H1 (cell line): ENCODE measurements at regions of chr13 and their contacts with region 1.

Region 1: DNA sequence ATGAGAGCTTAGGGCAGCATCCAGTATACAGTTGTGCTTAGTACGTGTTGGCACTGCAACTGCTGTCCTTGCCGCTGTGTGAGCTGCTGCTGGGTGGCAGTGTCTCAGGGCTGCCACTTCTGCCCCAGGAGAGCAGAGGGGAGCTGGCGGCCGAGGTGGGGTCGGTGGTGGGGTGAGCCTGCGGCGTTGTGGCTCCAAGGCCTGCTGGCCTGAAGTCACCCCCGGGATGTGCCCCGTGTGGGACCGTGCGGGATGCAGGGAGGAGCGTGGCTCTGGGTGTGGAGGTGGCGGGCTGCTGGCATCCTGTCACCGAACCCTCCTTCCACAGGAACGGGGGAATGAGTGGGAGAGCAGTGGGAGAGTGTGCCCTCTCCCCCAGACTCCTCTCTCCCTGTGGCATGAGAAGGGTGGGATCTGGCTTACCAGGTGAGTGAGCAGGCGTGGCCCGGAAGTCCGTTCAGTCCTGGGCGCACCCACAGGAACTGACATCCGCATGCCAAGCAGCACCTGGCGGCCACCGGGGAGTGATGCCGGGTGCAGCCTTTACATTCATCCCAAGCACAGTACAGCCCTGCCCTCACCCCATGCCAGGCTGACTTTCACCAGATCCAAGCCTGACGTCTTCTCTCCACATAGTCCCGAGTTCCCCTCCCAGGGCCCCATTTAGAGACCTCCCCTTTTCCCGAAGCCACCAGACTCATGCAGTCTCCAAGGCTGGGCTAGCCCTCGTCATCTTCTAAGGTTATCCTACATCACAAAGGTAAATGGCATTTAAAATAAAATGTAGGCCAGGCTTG is 26.6 kb downstream of the MCF2L start:
- DNase-seq: no peak
- H3K4me3 ChIP-seq: no peak overlapping the region
- H3K27ac ChIP-seq: no peak overlapping the region
- H3K4me1 ChIP-seq: peaks cover 0 to 2% (median under 1%) of the 10 kb centered on the region in 4 experiments; a peak in 4 of 7 replicates
- H3K27me3 ChIP-seq: no peaks in the 10 kb centered on the region
- CTCF ChIP-seq: no peak
- EP300 ChIP-seq: no peak
- POLR2A ChIP-seq: no peak
- RAD21 ChIP-seq: no peak

Region 2: DNA sequence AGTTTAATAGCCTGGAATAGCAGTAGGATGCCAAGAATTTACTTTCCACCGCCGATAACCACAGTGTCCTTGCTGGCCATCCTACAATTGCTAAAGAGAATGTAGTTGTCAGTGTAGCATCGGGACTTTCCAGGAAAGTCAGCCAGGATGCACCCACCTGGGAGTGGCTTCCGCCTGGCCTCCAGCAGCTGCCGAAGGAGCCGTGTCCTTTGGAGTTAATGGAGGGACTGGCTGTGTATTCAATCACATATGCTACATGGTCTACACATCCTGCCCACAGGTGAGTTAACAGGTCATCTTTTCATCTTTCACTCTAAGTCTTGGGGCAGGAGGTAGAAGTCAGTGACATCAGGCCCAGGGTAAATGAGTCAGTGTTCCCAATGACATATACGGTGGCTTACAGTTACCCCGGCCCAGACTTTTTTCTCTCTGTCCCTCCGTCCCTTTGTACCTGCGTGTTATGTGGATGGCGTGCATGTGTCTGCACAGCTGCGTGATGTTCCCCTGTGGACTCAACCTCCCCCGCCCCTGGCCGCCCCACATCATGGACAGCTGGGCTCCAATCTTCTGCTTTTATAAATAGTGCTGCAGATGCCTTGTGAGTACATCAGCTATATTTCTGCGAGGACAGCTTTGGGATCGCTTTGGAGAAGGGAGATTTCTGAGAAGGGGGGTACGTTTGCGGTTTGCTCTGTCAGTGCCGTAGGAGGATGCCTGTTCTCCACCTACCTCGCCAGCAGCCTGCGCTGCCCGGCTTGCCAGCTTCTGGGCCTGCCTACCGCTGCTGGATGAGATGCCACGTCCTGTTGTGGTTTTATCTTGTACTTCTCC is 242.7 kb before region 1 on chr13:
- CTCF ChIA-PET with region 1: no interaction called
- POLR2A ChIA-PET with region 1: no interaction called
- DNase-seq: no peak
- H3K4me3 ChIP-seq: no peak overlapping the region
- H3K27ac ChIP-seq: no peak overlapping the region
- H3K4me1 ChIP-seq: peaks cover 0 to 7% (median 4%) of the 10 kb centered on the region in 4 experiments; a peak in 2 of 7 replicates
- H3K27me3 ChIP-seq: no peaks in the 10 kb centered on the region
- CTCF ChIP-seq: no peak
- EP300 ChIP-seq: no peak
- POLR2A ChIP-seq: no peak
- RAD21 ChIP-seq: no peak

Region 3: GRCh38 chr13:112983428-112984196 is 12.0 kb before region 1 on chr13:
- CTCF ChIA-PET with region 1: interaction called, 18 read pairs
- POLR2A ChIA-PET with region 1: interaction called, 4 read pairs
- DNase-seq: no peak
- H3K4me3 ChIP-seq: no peak overlapping the region
- H3K27ac ChIP-seq: no peak overlapping the region
- H3K4me1 ChIP-seq: peaks cover 0 to 7% (median under 1%) of the 10 kb centered on the region in 4 experiments; a peak in 3 of 7 replicates
- H3K27me3 ChIP-seq: no peaks in the 10 kb centered on the region
- CTCF ChIP-seq: no peak
- EP300 ChIP-seq: no peak
- POLR2A ChIP-seq: no peak
- RAD21 ChIP-seq: no peak

Region 4: DNA sequence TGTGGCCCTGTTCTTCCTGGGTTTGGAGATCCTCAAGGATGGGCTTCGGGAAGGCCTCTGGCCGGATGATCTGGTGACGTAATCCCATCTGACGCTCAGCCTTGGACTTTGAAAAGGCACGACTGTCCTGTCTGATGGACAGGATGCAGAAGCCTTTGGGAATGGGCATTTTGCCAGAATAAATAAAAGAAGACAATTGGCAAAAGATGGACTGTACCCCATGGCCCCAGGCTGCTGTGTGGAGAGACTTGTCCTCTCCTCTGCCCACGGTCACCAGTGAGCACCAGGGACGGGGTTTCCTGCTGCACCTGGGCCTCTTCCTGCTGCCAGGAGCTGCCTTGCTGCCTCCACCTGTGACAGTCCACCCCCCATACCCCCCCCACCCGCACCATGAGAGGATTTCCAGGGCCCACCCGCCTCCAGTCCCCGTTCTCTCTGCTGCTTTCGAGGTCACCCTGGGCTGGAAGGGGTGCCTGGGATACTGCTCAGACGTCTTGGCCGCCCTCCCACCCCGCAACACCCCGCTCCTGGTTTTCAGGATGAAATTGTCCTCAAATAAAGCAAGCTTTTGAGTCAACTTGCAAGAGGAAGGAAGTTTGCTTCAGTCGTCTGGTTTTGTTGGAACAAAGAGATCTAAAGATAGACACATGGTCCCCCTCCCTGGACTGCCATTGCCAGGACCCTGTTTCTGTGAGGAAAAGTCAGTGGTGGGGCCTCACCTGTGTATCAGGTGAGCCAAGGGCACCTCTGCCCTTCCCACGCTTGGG is 14.3 kb after region 1 on chr13:
- CTCF ChIA-PET with region 1: interaction called, 10 read pairs
- POLR2A ChIA-PET with region 1: interaction called, 3 read pairs
- DNase-seq: no peak
- H3K4me3 ChIP-seq: no peak overlapping the region
- H3K27ac ChIP-seq: no peak overlapping the region
- H3K4me1 ChIP-seq: no peaks in the 10 kb centered on the region; a peak in 1 of 7 replicates
- H3K27me3 ChIP-seq: no peaks in the 10 kb centered on the region
- CTCF ChIP-seq: no peak
- EP300 ChIP-seq: no peak
- POLR2A ChIP-seq: no peak
- RAD21 ChIP-seq: no peak

Region 5: DNA sequence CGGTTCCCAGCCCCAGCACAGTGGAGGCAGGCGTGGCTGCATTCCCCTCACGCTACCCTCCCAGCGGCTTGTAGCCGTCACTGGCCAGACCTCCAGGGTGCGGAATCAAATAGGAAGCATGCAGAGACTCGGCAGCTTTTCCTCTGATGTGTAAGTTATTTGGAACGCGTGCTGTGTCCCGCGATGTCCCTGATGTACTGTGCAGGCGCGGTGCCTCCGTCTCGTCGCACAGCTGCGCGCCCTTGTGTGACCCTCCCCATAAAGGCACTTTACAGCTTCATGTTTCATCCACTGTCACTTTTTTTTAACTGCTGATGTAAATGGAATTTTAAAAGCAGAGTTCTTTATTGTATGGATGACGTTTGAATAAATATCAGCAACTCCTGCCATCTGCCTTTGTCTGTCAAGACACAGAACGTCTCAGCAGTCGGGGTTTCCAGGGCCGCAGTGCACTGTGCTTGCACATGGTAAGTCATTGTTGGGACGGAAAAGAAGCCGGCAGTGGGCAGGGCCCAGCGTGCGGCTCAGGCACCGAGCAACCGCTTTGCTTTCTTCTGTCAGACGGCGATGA is 102.7 kb after region 1 on chr13:
- CTCF ChIA-PET with region 1: no interaction called
- POLR2A ChIA-PET with region 1: no interaction called
- DNase-seq: no peak
- H3K4me3 ChIP-seq: no peak overlapping the region
- H3K27ac ChIP-seq: no peak overlapping the region
- H3K4me1 ChIP-seq: no peaks in the 10 kb centered on the region; a peak in 1 of 7 replicates
- H3K27me3 ChIP-seq: no peaks in the 10 kb centered on the region
- CTCF ChIP-seq: no peak
- EP300 ChIP-seq: no peak
- POLR2A ChIP-seq: no peak
- RAD21 ChIP-seq: no peak

Region 6: DNA sequence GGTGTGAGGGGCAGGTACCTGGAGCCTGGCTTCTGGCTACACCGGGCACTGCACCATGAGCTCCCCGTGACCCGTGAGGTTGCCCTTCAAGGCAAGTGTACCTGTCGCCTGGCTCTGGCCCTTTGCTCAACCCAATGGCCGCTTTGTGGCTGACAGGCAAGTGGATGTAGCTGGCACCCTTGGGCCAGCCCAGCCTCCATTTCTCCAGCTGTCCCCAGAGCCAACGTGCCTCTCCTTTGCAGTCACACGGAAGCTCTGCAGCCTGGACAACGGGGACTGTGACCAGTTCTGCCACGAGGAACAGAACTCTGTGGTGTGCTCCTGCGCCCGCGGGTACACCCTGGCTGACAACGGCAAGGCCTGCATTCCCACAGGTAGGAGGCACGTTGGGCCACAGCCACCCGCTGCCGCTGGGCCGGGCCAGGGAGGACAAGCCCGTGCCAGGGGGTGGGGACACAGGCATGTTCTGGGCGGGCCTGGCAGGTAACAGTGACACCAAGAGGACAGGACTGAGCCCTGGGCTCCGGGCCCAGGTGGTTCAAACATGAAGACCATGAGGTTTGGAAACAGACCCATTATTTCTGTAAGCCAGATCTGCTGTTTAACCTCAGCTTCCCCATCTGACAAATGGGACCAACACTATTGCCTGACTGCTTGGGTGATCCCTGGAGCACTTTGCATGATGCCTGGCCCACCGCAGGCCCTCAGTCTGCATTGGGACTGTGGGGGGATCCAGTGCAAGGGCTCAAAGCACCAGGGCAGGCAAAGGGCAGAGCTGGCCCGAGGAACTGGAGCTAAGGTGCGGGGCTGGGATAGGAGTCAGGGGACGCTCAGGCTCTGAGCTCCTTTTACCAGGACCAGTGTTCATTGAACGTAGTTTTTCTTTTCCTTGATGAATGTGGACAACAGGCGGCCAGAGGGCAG is 145.3 kb after region 1 on chr13:
- CTCF ChIA-PET with region 1: no interaction called
- POLR2A ChIA-PET with region 1: no interaction called
- DNase-seq: no peak
- H3K4me3 ChIP-seq: no peak overlapping the region
- H3K27ac ChIP-seq: no peak overlapping the region
- H3K4me1 ChIP-seq: peaks cover 0 to 3% (median under 1%) of the 10 kb centered on the region in 4 experiments; a peak in 4 of 7 replicates
- H3K27me3 ChIP-seq: no peaks in the 10 kb centered on the region
- CTCF ChIP-seq: no peak
- EP300 ChIP-seq: no peak
- POLR2A ChIP-seq: no peak
- RAD21 ChIP-seq: no peak

Region 7: DNA sequence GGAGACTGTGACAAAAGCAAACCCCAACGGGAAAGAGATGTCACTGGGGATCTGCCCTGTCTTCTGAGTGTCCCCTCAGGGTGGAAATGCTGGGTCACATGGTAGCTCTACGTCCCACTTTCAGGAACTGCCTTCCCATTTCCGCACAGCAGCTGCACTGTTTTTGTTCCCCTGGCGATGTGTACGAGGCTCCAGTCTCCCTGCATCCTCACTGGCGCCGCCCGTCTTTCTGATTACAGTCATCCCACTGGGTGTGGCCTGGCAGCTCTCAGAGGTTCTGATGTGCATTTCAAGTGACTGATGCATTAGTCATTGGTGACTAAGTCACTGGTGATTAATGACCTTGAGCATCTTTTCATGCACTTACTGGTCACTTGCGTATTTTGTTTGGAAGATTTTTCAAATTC is 191.7 kb after region 1 on chr13:
- CTCF ChIA-PET with region 1: no interaction called
- POLR2A ChIA-PET with region 1: no interaction called
- DNase-seq: no peak
- H3K4me3 ChIP-seq: no peak overlapping the region
- H3K27ac ChIP-seq: no peak overlapping the region
- H3K4me1 ChIP-seq: no peaks in the 10 kb centered on the region
- H3K27me3 ChIP-seq: no peaks in the 10 kb centered on the region
- CTCF ChIP-seq: no peak
- EP300 ChIP-seq: no peak
- POLR2A ChIP-seq: no peak
- RAD21 ChIP-seq: no peak